Endothelial cell of umbilical vein (primary cell): ENCODE measurements at regions of chr13 and their contacts with region 1.

Region 1: GRCh38 chr13:31044377-31045285 is 112.2 kb downstream of the TEX26 start:
- DNase-seq: peak; percentile 83
- H3K4me3 ChIP-seq: no peak overlapping the region
- H3K27ac ChIP-seq: peak overlapping the region; percentile 68
- H3K4me1 ChIP-seq: peaks cover 35% of the 10 kb centered on the region
- H3K27me3 ChIP-seq: no peaks in the 10 kb centered on the region
- CTCF ChIP-seq: peak; percentile 92 to 93
- POLR2A ChIP-seq: no peak

Region 2: DNA sequence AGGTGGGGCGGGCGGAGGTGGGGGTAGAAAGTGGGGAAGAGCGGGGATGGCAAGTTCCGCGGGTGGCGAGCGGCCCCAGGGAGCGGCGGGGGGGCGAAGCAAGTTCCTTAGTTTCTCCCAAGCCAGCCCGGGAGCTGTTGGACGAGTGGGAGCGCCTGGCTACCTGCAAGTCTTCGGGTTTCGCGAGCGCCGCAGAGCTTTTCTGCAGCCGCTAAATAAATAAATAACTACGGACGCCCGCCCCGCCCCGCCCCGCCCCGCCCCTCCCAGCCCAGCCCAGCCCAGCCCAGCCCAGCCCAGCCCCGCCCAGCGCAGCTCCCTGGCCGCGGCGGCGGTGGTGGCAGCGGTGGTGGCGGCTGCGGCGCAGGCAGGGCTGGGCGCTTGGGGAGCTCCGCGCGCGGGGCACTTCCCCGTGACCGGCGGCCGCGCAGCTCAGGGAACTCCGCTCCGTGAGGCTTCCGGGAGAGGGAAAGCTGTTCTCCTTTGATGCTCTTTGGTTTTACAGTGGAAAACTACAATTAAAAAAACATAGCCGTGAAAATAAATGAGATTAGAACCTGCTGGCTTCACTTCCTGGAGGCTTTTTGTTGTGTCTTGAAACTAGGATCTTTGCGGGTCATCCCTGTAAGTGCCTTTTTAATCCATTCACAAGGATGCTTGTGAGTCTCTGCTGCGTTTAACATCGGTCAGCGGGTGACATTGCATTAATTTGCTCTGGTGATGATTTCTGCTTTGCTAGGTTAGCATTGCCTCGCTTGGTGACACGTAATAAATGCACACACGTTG is 622.4 kb before region 1 on chr13 and contains the start of gene UBE2L5:
- CTCF ChIA-PET with region 1: no interaction called
- POLR2A ChIA-PET with region 1: no interaction called
- dilution Hi-C with region 1: no loop called
- intact Hi-C with region 1: loop called (anchors 10 kb)
- DNase-seq: peak; percentile 65
- H3K4me3 ChIP-seq: peak within 1 kb of the TSS; percentile 54 to 81 (median 77)
- H3K27ac ChIP-seq: peak within 1 kb of the TSS; percentile 40
- H3K4me1 ChIP-seq: peaks cover 10% of the 10 kb centered on the region
- H3K27me3 ChIP-seq: no peaks in the 10 kb centered on the region
- CTCF ChIP-seq: no peak
- POLR2A ChIP-seq: peak; percentile 16
- total RNA-seq, gene UBE2L5: not detected in 2 replicates

Region 3: DNA sequence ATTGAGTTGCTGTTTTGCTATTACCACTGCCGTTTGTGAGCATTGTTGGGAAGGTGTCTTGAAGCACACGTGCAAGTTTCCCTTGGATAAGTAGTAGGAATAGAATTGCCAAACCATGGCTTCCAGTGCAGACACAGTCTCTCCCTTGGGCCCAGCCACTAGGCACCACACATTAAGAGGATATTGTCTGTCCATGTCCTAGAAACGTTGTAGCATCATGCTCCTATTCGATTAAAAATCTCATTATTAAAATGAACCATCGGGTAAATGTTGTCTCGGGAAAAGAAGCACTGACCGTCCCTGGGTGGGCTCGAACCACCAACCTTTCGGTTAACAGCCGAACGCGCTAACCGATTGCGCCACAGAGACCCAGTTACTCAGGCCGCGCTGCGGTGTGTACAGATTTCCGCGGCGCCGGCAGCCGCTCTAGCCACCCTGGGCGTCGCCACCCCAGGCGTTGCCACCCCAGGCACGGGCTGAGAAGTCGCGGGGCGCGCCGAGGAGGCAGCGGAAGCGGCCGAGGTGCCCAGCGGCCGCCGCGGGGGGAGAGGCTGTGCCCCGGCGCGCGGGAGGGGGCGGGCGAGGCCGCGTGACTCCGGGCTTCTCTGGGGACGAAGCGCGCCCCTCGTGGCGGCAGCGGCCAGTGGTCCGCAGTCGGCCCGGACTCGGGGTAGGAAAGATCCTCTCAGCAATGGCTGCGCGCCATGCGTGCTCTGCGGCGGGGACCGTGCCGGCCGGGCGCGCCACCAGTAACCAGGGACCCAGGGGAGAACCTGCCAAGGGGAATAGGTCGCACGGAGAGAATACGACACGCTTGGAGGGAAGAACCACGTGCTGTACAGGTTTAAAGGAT is 370.7 kb before region 1 on chr13:
- CTCF ChIA-PET with region 1: interaction called, 5 read pairs
- POLR2A ChIA-PET with region 1: no interaction called
- dilution Hi-C with region 1: no loop called
- intact Hi-C with region 1: loop called (anchors 1 kb)
- DNase-seq: peak; percentile 88
- H3K4me3 ChIP-seq: peak overlapping the region; percentile 39 to 48 (median 43)
- H3K27ac ChIP-seq: peak overlapping the region; percentile 66
- H3K4me1 ChIP-seq: peaks cover 8% of the 10 kb centered on the region
- H3K27me3 ChIP-seq: no peaks in the 10 kb centered on the region
- CTCF ChIP-seq: peak; percentile 82 to 83
- POLR2A ChIP-seq: no peak

Region 4: DNA sequence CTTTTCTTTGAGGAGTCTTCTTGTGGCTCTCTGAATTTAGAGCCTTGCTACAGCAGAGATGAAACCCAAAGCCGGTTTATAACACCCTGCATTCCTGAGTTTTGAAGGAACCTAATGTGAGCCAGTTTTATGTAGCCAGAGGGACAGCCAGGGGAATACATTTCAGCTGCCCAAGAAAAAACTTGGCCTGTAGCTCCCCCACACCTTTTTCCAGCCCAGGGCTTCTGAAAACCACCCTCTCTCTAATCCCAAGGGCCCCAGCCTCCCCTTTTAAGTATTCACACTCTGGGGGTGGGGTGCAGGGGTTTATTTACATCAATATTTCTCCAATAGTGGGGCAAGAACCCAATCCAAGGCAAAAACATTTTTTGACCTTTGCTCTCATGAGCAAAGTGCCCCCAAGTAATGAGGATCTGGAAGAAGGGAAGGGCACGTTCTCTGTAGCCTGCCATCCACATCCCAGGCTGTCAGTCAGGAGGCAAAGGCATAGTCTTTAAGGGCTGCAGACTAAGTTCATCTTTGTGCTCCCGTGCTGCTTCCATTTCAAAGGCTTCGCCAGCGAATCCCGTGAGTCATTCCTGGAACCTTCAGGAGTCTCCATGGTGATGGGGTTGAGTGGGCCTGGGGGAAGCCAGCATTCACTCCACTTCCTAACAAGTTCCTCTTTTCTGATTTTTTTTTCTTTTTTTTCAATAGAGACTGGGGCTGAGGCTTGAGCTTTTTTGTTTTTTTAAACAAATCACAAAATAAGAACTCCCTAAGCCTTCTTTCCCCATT is 171.8 kb before region 1 on chr13:
- CTCF ChIA-PET with region 1: interaction called, 12 read pairs
- POLR2A ChIA-PET with region 1: no interaction called
- dilution Hi-C with region 1: no loop called
- intact Hi-C with region 1: loop called (anchors 2 kb)
- DNase-seq: peak; percentile 97
- H3K4me3 ChIP-seq: no peak overlapping the region
- H3K27ac ChIP-seq: peak overlapping the region; percentile 79
- H3K4me1 ChIP-seq: peaks cover 50% of the 10 kb centered on the region
- H3K27me3 ChIP-seq: no peaks in the 10 kb centered on the region
- CTCF ChIP-seq: no peak
- POLR2A ChIP-seq: no peak

Region 5: DNA sequence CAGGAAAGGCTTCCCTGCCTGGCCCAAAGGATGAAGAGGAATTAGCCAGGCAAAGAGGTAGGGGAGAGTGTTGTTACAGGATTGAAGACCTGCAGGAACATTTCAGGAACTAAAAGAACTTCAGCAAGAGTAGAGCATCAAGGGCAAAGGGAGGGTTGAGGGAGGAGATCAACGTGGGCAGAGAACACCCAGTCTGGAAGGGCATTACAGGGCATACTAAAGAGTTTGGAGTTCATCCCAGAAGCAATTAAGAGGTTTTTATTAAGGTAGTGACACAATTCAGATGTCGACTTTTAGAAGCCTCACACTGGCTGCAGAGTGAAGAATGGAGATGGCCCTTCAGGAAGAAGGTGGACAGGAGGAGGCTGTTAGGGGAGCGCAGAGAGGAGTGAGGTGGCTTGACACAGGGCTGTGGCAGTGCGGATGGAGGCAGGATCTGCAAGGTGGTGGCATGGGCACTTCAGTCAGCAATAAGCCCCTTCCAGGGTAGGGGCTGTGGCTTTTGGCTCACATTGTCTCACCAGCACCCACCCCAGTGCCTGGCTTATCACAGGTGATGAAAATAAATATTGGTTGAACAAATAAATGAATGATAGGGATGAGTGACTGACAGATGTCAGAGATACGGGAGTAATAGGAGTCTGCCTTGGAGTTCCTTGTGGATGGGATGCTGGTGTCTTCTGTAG is 87.2 kb before region 1 on chr13:
- CTCF ChIA-PET with region 1: no interaction called
- POLR2A ChIA-PET with region 1: no interaction called
- dilution Hi-C with region 1: no loop called
- intact Hi-C with region 1: no loop called
- DNase-seq: no peak
- H3K4me3 ChIP-seq: no peak overlapping the region
- H3K27ac ChIP-seq: no peak overlapping the region
- H3K4me1 ChIP-seq: no peaks in the 10 kb centered on the region
- H3K27me3 ChIP-seq: peaks cover 10 to 27% of the 10 kb centered on the region in 2 experiments
- CTCF ChIP-seq: no peak
- POLR2A ChIP-seq: no peak

Region 6: DNA sequence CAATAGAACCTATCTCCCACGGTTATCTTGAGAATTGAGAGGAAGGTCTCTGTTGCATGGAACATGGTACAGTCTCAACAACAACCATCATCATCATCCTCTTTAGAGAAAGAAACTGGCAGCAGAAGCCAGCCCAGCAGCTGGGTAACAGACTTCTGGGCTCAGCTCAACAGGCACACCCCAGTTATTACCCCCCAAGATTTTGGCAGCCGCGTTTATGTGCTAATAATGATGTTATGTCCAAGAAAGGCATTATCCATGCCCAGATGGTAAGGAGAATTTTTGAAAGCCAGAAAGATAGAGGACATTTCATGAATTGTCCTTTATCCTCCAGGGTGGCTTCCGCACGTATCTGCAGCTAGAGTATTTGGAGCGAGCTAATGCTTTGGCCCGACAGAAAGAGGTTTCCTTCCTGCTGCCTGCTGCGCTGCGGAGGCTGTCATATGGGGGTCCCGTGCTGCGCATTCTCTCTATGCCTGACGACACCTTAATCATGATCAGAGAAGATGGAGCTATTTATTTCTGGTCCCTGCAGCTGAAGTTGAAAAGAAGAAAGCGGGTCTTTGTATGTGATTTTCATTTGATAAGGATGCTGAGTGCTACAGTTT is 22.2 kb before region 1 on chr13:
- CTCF ChIA-PET with region 1: interaction called, 10 read pairs
- POLR2A ChIA-PET with region 1: no interaction called
- dilution Hi-C with region 1: no loop called
- intact Hi-C with region 1: no loop called
- DNase-seq: no peak
- H3K4me3 ChIP-seq: no peak overlapping the region
- H3K27ac ChIP-seq: no peak overlapping the region
- H3K4me1 ChIP-seq: no peaks in the 10 kb centered on the region
- H3K27me3 ChIP-seq: peaks cover 16 to 20% of the 10 kb centered on the region in 2 experiments
- CTCF ChIP-seq: no peak
- POLR2A ChIP-seq: no peak

Region 7: DNA sequence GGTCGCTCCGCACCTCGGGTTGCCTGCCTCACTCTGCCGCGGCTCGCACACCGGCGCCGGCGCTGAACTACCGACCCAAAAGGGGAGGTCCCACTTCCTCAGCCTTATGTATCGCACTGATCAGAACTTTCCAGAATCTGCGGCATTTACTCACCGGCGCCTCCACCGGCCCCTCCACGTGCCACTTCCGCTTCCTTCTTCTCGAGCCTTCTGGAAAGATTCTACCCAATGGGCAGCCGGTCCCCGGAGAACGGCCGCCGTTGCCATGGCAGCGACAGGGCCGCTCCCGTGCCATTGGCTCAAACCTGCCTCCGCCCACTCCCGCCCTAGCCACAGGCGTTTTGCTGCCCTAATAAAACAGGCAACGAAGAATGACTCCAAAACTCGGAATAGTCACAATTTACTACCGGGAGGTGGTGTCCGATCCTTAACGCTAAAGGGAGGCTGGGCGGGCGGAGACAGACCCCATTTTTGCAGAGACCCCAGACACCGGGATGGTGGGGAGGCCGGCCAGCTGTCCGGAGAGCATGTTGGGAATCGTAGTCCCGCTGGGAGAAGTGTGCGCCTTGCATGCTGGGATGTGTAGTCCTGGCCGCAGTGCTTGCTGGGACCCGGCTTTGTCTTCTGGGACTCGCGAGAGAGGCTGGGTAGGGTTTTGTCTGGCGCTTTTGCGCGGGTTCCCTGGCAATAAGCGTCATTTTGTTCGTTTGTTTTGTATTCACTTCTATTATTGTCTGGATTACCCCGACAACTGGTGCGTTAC is 117.4 kb after region 1 on chr13 and contains the start of gene HSPH1:
- CTCF ChIA-PET with region 1: interaction called, 10 read pairs
- POLR2A ChIA-PET with region 1: no interaction called
- dilution Hi-C with region 1: no loop called
- intact Hi-C with region 1: loop called (anchors 1 kb)
- DNase-seq: peak; percentile 98
- H3K4me3 ChIP-seq: peak within 1 kb of the TSS; percentile 88 to 99 (median 97)
- H3K27ac ChIP-seq: peak within 1 kb of the TSS; percentile 95
- H3K4me1 ChIP-seq: peaks cover 24% of the 10 kb centered on the region
- H3K27me3 ChIP-seq: no peaks in the 10 kb centered on the region
- CTCF ChIP-seq: peak in 1 of 2 donors; percentile 31
- POLR2A ChIP-seq: peak; percentile 81
- total RNA-seq, gene HSPH1: 98.1 and 124 TPM in 2 replicates